Posterior vena cava (tissue), 2 donors: ENCODE measurements at regions of chrX and their contacts with region 1.

Region 1: DNA sequence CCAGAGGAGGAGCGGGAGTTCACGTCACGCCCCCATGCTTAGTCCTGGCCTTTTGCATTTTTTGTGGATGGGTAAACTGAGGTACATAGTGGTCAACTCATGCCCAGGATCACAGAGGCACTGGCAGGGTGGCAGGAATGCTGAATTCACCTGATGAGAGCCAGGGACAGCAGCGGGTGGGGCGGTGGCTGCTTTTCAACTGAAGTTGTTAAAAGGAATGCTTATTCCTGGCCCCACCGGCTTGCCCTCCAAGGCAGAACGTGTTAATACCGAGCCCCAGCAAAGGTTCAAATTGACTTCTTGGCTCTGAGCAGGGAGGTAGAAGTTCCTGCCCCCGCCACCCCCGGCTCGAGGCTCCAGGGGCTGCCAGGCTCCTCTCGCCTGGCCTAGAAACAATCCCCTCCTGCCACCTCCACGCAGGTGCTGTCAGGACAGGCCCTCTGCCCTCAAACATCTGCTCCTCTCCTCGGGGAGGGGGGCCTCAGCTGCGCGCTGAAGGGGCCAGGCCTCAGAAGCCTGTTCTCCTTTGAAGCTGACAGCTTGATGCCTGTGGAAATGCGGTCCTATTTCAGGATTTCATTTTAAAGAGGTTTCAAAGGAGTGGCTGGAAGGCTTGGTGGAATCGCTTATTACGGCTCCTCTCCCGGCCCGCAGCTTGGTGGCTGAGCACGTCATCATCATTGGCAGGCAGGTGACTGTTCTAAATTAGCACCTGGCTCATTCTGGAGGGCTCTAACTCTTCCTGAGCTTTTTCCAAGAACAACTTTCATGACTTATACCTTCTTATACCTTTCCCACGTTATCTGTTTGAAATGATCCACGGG is 93.0 kb downstream of the PHKA2 start:
- DNase-seq: peak; percentile 53

Region 2: GRCh38 chrX:18424482-18425198 is 466.3 kb before region 1 on chrX:
- intact Hi-C with region 1: loop called (anchors 5 to 10 kb)
- DNase-seq: no peak

Region 3: DNA sequence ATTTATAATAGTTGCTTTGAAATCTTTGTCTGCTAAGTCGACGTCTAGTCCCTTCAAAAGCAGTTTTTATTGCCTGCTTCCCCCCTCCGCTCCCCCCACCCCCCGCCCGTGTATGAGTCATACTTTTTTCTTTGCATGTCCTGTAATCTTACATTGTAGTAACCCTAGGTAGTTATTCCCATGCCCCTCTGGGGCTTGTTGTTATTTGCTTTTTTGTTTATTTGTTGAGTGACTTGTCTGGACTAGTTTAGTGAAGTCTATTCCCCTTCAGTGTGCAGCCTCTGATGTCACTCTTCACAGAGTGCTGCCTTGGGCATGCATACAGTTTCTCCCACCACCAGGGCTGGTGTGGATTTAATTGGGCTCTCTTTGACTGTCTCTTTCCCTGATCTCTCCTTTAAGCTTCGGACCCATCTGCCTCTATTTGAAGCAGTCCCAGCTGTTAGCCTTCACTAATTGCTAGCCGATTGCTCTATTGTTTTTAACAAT is 97.3 kb before region 1 on chrX:
- intact Hi-C with region 1: no loop called
- DNase-seq: no peak

Region 4: GRCh38 chrX:18951032-18951431 is 60.1 kb after region 1 on chrX:
- intact Hi-C with region 1: no loop called
- DNase-seq: no peak